ENCODE measurements at regions of chr12 and their contacts with region 1.

Region 1: GRCh38 chr12:89524541-89525285 is at the start of gene GALNT4:
- DNase-seq: peak; percentile 93
- H3K4me3 ChIP-seq: peak within 1 kb of the TSS; percentile 97 to 99
- H3K27ac ChIP-seq: peak within 1 kb of the TSS; percentile 81 to 95
- H3K4me1 ChIP-seq: peaks cover 12 to 26% of the 10 kb centered on the region in 2 experiments
- H3K27me3 ChIP-seq: no peaks in the 10 kb centered on the region
- CTCF ChIP-seq: peak; percentile 72
- EP300 ChIP-seq: no peak
- RAD21 ChIP-seq: peak; percentile 59
- polyA plus RNA-seq, gene GALNT4: 1.1 and 1.4 TPM in 2 replicates

Region 2: GRCh38 chr12:89239534-89239933 is 285.2 kb before region 1 on chr12:
- CTCF ChIA-PET with region 1: no interaction called
- POLR2A ChIA-PET with region 1: no interaction called
- DNase-seq: no peak
- H3K4me3 ChIP-seq: no peak overlapping the region
- H3K27ac ChIP-seq: no peak overlapping the region
- H3K4me1 ChIP-seq: peaks cover 5 to 20% of the 10 kb centered on the region in 2 experiments; a peak in 2 of 4 replicates
- H3K27me3 ChIP-seq: no peaks in the 10 kb centered on the region
- CTCF ChIP-seq: no peak
- EP300 ChIP-seq: no peak
- RAD21 ChIP-seq: no peak

Region 3: GRCh38 chr12:89363084-89363483 is 161.6 kb before region 1 on chr12:
- CTCF ChIA-PET with region 1: no interaction called
- POLR2A ChIA-PET with region 1: no interaction called
- DNase-seq: no peak
- H3K4me3 ChIP-seq: no peak overlapping the region
- H3K27ac ChIP-seq: no peak overlapping the region
- H3K4me1 ChIP-seq: peaks cover under 1 to 7% of the 10 kb centered on the region in 2 experiments; a peak in 2 of 4 replicates
- H3K27me3 ChIP-seq: no peaks in the 10 kb centered on the region
- CTCF ChIP-seq: no peak
- EP300 ChIP-seq: no peak
- RAD21 ChIP-seq: no peak

Region 4: GRCh38 chr12:89470741-89471509 is 53.8 kb before region 1 on chr12:
- CTCF ChIA-PET with region 1: interaction called, 50 read pairs
- POLR2A ChIA-PET with region 1: no interaction called
- DNase-seq: peak; percentile 29
- H3K4me3 ChIP-seq: no peak overlapping the region; a peak in 1 of 4 replicates
- H3K27ac ChIP-seq: no peak overlapping the region
- H3K4me1 ChIP-seq: peaks cover 2 to 6% of the 10 kb centered on the region in 2 experiments; a peak in 2 of 4 replicates
- H3K27me3 ChIP-seq: no peaks in the 10 kb centered on the region
- CTCF ChIP-seq: peak; percentile 77
- EP300 ChIP-seq: no peak
- RAD21 ChIP-seq: peak; percentile 80

Region 5: GRCh38 chr12:89494411-89495231 is 30.1 kb before region 1 on chr12:
- CTCF ChIA-PET with region 1: interaction called, 13 read pairs
- POLR2A ChIA-PET with region 1: no interaction called
- DNase-seq: no peak
- H3K4me3 ChIP-seq: no peak overlapping the region
- H3K27ac ChIP-seq: peak overlapping the region in 1 of 2 experiments; percentile 3; a peak in 1 of 4 replicates
- H3K4me1 ChIP-seq: no peaks in the 10 kb centered on the region
- H3K27me3 ChIP-seq: no peaks in the 10 kb centered on the region
- CTCF ChIP-seq: no peak
- EP300 ChIP-seq: no peak
- RAD21 ChIP-seq: no peak

Region 6: DNA sequence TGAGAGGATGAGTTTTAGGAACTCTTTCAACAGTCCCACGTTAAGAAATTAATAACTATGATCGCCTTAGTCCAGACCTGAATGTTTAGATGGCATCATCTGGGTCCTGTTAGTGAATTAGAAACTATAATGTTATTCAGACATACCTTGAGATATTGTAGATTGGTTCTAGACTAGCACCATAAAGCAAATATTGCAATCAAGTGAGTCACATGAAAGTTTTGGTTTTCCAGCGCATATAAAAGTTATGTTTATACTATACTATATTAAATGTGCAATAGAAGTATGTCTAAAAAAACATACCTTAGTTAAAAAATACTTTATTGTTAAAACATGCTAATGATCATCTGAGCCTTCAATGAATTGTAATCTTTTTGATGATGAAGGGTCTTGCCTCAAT is 290.5 kb after region 1 on chr12:
- CTCF ChIA-PET with region 1: no interaction called
- POLR2A ChIA-PET with region 1: no interaction called
- DNase-seq: no peak
- H3K4me3 ChIP-seq: no peak overlapping the region
- H3K27ac ChIP-seq: no peak overlapping the region
- H3K4me1 ChIP-seq: no peaks in the 10 kb centered on the region
- H3K27me3 ChIP-seq: no peaks in the 10 kb centered on the region
- CTCF ChIP-seq: no peak
- EP300 ChIP-seq: no peak
- RAD21 ChIP-seq: no peak